Motor neuron (in vitro differentiated cells): ENCODE measurements at regions of chr18 and their contacts with region 1.

Region 1: DNA sequence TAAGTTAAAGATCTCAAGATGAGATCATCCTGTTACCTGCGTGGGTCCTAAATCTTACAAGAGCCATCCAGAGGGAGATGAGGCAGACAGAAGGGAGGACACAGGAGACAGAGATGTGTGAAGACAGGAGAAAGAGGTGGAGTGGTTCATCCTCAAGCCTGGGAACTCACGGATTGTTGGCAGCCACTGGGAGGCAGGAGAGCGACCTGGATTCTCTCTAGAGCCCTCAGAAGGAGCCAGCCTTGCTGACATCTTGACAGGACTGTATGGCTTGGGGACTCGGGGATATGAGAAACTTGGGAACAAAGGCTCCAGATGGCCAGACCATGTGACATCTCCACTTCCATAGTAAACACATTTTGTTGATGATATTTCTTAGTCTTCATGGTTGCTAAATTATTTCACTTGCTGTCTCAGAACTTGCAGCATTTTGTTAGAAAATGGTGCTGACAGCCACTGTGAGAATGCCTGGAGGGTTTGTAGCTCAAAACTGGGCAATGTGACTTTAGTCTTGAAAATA is 57.8 kb upstream of the MC2R start:
- ATAC-seq: peak in 2 of 8 experiments; percentile 61 to 62
- H3K4me3 ChIP-seq: no peak overlapping the region
- H3K27ac ChIP-seq: no peak overlapping the region
- H3K4me1 ChIP-seq: no peaks in the 10 kb centered on the region

Region 2: DNA sequence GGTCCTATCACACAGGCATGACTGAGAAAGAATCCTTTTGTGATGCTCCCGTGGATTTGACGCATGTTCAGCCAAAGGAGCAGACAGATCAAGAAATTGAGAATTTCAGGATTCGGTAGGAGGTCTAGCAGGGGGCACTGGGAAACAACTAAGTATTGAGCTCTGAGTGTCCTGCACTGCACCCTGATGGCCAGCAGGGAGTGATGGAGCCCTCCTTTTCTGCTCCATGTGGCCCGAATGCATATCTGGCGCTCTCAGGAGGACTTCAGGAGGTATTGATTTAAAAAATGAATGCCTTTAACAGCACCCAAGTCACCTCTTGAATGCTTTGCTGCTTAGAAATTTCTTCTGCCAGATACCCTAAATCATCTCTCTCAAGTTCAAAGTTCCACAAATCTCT is 101.1 kb after region 1 on chr18:
- in situ Hi-C with region 1: loop called in 1 of 9 experiments (anchors 25 kb)
- ATAC-seq: peak in 2 of 8 experiments; percentile 36 to 39
- H3K4me3 ChIP-seq: no peak overlapping the region
- H3K27ac ChIP-seq: no peak overlapping the region
- H3K4me1 ChIP-seq: no peaks in the 10 kb centered on the region